ENCODE measurements at regions of chr6 and their contacts with region 1.

Region 1: DNA sequence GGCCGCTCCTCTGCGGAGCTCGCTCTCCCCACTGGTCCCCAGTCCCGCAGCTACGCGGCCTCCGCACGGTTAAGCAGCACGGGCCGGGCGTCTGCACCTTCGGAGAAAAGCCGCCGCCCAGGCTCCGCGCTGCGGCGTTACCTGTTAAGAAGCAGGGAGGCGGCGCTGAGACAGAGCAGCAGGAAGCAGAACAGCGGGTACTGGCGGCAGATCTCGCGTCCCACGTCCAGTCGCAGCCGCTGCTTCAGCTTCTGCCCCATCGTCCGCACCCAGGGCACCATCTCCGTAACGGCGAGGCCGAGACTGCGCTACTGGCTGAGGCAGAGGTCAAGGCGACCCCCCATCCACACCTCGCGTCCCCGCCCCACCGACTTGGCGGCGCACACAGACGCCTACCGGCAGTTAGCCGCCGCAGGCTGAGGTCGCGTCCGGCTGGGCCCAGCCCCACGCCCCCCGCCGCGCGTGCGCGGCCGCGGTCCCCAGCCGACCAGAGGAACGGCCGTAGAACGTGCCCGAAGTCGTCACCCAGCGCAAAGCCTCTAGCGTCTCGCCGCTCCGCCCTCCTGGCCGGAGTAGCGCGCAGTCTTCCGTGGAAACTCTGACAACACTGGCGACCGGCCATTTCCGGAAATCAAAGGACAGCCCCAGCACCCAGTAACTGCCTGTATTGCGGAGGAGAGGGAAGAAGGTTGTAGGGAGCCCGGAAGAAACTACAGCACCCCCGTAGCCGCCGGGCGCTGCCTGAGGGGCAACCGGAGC is at the start of gene SNX14:
- DNase-seq: peak; percentile 74
- H3K4me3 Mint-ChIP-seq: peak within 1 kb of the TSS; percentile 94
- H3K27ac Mint-ChIP-seq: peak within 1 kb of the TSS; percentile 93
- H3K4me1 Mint-ChIP-seq: peaks cover 14% of the 10 kb centered on the region
- H3K27me3 Mint-ChIP-seq: no peaks in the 10 kb centered on the region
- total RNA-seq, gene SNX14: 49.5 and 51.0 TPM in 2 replicates

Region 2: GRCh38 chr6:85449818-85450759 is 143.5 kb before region 1 on chr6 and contains the start of gene NT5E:
- intact Hi-C with region 1: loop called (anchors 1 kb)
- DNase-seq: peak; percentile 37
- H3K4me3 Mint-ChIP-seq: peak within 1 kb of the TSS; percentile 98
- H3K27ac Mint-ChIP-seq: peak within 1 kb of the TSS; percentile 89
- H3K4me1 Mint-ChIP-seq: peaks cover 66% of the 10 kb centered on the region
- H3K27me3 Mint-ChIP-seq: peaks cover 31% of the 10 kb centered on the region
- total RNA-seq, gene NT5E: 12.5 and 15.2 TPM in 2 replicates

Region 3: DNA sequence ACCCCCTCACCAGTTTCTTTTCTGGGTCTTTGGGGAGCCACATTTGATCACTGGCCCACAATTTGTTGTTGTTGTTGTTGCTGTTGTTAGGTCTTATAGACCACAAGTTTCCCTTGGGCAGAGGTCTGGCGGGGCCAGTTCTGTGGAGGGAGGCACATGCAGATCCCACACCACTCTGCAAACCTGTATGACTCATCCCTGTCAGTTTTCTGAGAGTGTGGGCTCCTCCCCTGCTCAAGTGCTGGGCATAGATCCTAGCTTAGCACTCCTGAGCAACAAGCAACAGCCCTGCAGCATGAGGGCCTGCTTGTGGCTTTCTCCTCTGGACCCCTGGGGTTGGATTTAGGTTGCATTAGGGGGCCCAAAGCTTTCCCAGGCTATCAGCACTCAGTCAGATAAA is 932.6 kb after region 1 on chr6:
- intact Hi-C with region 1: no loop called
- DNase-seq: no peak
- H3K4me3 Mint-ChIP-seq: no peak overlapping the region
- H3K27ac Mint-ChIP-seq: no peak overlapping the region
- H3K4me1 Mint-ChIP-seq: no peaks in the 10 kb centered on the region
- H3K27me3 Mint-ChIP-seq: no peaks in the 10 kb centered on the region